Activated CD4-positive, alpha-beta T cell treated with anti-CD3 and anti-CD28 coated beads, Interleukin-2, amount 10 ng/mL, durations not matched to agents 7 days and 5 days (primary cell): ENCODE measurements at regions of chr17 and their contacts with region 1.

Region 1: DNA sequence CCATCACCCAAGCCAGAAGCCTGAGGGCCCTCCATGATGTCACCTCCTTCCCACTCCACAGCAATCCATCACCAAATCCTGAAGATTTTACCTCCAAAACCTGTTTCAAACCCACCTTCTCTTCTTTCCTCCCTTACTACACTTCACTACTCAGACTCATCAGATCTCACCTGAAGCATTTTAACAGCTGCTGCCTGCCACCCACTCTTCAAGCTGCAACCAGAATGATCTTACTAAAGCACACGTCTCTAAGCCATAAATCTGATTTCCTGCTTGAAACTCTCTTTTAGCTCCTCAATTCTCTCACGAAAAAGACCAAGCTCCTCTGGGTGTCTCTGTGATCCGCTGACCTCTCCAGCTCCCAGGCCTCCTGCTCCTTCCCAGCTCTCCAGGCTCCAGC is 46.5 kb downstream of the CDK5R1 start:
- DNase-seq: no peak
- H3K4me3 Mint-ChIP-seq: no peak overlapping the region
- H3K27ac Mint-ChIP-seq: no peak overlapping the region
- H3K4me1 Mint-ChIP-seq: peaks cover 11% of the 10 kb centered on the region
- H3K27me3 Mint-ChIP-seq: peaks cover 2% of the 10 kb centered on the region

Region 2: DNA sequence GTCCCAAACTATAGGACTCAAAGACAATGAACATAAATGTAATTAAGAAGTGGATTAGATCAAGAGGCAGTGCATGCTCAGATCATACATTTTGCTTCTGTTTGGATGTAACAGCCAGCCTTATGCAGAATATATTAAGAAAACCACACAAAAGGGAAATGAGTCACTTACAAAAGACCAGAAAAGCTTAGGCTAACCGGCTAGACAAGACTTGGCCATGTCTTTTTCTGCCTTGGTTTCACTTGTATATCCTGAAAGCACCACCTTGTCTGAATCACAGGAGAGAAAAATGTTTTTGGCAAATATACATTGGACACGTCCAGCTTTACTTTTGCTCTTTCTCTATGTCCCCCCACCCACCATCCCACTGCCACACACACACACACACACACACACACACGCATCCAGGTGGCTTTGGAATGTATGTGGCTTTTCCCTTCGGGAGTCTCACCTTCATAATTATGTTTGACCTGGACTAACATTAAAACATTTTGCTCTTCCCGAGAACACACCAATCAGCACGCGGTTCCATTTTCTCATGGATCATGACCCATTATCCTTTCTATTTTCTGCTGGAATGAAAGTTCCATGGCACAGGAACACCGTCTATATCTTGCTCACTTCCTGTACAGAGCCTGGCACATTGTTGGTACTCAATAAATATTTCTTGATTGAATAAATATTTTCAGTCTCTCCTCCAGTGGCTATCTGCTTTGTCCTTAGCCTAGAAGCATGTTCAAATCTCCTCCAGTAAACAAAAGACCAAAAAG is 18.1 kb after region 1 on chr17:
- CTCF ChIA-PET with region 1: interaction called, 12 read pairs
- POLR2A ChIA-PET with region 1: interaction called, 3 read pairs
- DNase-seq: peak; percentile 29
- H3K4me3 Mint-ChIP-seq: no peak overlapping the region
- H3K27ac Mint-ChIP-seq: peak overlapping the region; percentile 71
- H3K4me1 Mint-ChIP-seq: peaks cover 42% of the 10 kb centered on the region
- H3K27me3 Mint-ChIP-seq: peaks cover 2% of the 10 kb centered on the region